A673 (cell line): ENCODE measurements at regions of chr22 and their contacts with region 1.

Region 1: DNA sequence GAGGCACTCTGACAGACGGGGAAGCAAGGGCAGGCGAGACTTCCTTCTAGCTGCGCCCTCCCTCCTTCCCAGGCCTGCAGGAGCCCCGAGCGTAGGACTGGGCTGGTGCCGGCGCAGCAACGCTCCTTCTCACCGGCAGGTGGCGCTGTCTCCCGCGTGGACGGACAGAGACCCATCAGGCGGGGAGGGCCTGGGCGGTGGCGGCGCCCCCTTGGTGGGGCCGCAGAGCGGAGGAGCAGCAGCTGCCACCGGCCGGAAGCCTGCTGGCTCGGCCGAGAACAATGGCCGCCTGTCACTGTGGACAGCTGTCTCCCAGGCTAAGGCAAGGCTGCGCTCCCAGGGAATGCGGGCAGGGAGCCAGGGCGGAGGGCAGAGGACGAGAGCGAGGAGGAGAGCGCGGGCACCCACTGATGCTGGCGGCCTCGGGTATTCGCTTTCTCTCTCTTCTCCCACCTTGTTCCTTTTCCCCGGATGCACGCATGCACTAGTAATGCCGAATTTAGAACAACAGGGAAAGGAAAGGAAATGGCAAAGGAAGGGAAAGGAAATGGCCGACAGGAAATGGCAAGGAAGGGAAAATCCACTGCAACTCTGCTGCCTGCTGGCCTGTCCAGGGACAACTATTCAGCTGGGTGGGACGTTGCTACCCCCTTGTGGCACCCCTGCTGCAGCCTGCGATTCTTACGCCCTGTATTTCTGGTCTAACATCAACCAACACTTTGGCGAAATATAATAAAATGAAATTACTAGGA is 14.4 kb downstream of the PPM1F start:
- DNase-seq: peak; percentile 94
- H3K4me3 ChIP-seq: peak overlapping the region; percentile 49
- H3K27ac ChIP-seq: peak overlapping the region; percentile 91
- H3K4me1 ChIP-seq: peaks cover 57% of the 10 kb centered on the region
- H3K27me3 ChIP-seq: no peaks in the 10 kb centered on the region
- CTCF ChIP-seq: peak; percentile 97

Region 2: GRCh38 chr22:21712894-21713712 is 225.1 kb before region 1 on chr22:
- CTCF ChIA-PET with region 1: interaction called, 8 read pairs
- POLR2A ChIA-PET with region 1: no interaction called
- intact Hi-C with region 1: loop called (anchors 1 kb)
- DNase-seq: peak; percentile 93
- H3K4me3 ChIP-seq: no peak overlapping the region
- H3K27ac ChIP-seq: no peak overlapping the region
- H3K4me1 ChIP-seq: peaks cover 4% of the 10 kb centered on the region
- H3K27me3 ChIP-seq: no peaks in the 10 kb centered on the region
- CTCF ChIP-seq: peak; percentile 90

Region 3: DNA sequence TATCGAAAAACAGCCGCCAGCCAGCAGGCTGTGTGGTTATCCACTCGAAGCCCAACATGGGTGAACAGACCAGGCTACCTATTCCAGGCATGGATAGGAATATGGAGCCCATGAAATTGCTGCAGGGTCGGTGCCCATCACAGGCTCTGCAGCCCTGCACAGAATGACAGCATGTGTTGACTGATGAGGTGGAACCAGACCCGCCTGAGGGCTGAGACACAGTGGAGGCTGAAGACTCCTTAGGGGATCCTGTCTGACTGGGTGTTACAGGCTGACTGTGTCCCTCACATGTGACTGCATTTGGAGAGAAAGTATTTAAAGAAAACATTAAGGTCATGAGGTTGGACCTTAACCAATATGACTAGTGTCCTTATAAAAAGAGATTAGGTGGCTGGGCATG is 196.4 kb before region 1 on chr22:
- CTCF ChIA-PET with region 1: no interaction called
- POLR2A ChIA-PET with region 1: interaction called, 13 read pairs
- intact Hi-C with region 1: no loop called
- DNase-seq: no peak
- H3K4me3 ChIP-seq: no peak overlapping the region
- H3K27ac ChIP-seq: no peak overlapping the region
- H3K4me1 ChIP-seq: no peaks in the 10 kb centered on the region
- H3K27me3 ChIP-seq: no peaks in the 10 kb centered on the region
- CTCF ChIP-seq: no peak

Region 4: DNA sequence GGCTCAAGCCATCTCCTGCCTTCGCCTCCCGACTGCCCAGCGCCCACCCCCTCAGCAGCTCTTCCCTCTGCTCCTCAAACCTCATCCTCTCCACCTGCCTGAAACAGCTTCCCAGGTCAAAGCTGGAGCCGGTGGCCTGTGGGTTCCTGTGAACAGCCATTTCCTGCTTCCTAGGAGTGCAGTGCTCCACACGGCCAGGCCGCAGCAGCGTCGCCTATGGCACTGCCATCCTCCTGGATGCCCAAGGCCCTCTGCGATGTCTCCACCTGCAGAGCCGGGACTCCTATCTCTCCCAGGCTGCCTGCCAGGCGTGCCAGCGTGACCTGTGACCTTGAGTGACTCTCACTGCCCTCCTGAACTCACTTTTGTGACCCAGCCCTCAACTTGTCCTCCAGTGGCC is 10.2 kb before region 1 on chr22:
- CTCF ChIA-PET with region 1: interaction called, 3 read pairs
- POLR2A ChIA-PET with region 1: interaction called, 16 read pairs
- intact Hi-C with region 1: no loop called
- DNase-seq: no peak
- H3K4me3 ChIP-seq: no peak overlapping the region
- H3K27ac ChIP-seq: no peak overlapping the region
- H3K4me1 ChIP-seq: peaks cover 27% of the 10 kb centered on the region
- H3K27me3 ChIP-seq: no peaks in the 10 kb centered on the region
- CTCF ChIP-seq: no peak

Region 5: DNA sequence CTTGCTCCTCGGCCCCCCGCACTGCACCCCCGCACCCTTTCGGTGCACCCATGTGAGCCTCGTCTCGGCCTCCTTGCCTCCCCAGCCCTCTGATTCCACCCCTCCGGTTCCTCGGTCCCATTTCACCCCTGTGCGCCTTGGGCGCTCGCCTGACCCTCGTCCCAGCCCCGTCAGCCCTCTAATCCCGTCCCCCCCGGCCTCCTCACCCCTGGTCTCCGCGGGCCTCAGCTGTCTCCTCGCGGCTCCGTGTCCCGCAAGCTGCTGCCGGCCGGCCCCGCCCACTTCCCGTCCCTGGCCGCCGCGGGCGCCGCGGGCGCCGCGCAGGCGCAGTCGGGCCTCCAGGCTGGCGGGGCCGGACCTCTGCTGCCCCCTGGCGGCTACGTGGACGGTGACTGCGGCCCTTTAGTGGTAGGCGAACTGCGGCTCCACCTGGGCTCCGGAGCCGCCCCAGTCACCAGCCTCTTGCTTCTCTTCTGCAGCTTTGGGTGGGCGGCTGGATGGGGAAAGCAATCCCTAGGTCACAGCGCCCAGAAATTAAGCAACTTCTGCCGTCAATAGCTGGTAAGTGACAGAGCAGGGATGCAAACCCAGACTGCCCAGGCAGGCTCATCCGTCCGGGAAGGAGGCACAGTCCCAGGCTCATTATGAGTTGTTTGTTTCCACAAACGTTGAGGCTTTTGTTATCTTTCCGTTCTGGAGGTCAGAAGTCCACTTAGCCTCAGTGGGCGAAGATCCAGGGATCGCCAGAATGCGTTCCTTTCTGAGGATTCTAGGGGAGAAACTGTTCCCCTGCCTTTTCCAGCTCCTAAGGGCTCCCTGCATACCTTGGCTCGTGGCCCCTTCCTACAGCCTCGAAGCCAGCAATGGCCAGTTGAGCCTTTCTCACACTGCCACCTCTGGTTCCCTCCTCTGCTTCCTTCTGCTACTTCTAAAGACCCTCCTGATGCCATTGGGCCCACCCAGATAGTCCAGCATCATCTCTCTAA is 14.6 kb after region 1 on chr22 and contains the start of gene PPM1F:
- CTCF ChIA-PET with region 1: interaction called, 17 read pairs
- POLR2A ChIA-PET with region 1: no interaction called
- intact Hi-C with region 1: no loop called
- DNase-seq: peak; percentile 87
- H3K4me3 ChIP-seq: peak within 1 kb of the TSS; percentile 78
- H3K27ac ChIP-seq: peak within 1 kb of the TSS; percentile 85
- H3K4me1 ChIP-seq: peaks cover 21% of the 10 kb centered on the region
- H3K27me3 ChIP-seq: no peaks in the 10 kb centered on the region
- CTCF ChIP-seq: peak; percentile 75
- total RNA-seq, gene PPM1F: 85.9 and 101 TPM in 2 replicates

Region 6: GRCh38 chr22:22156716-22157347 is 218.6 kb after region 1 on chr22:
- CTCF ChIA-PET with region 1: no interaction called
- POLR2A ChIA-PET with region 1: no interaction called
- intact Hi-C with region 1: no loop called
- DNase-seq: peak; percentile 77
- H3K4me3 ChIP-seq: no peak overlapping the region
- H3K27ac ChIP-seq: no peak overlapping the region
- H3K4me1 ChIP-seq: no peaks in the 10 kb centered on the region
- H3K27me3 ChIP-seq: peaks cover 27% of the 10 kb centered on the region
- CTCF ChIP-seq: peak; percentile 82